ENCODE measurements at regions of chr11 and their contacts with region 1.

Region 1: DNA sequence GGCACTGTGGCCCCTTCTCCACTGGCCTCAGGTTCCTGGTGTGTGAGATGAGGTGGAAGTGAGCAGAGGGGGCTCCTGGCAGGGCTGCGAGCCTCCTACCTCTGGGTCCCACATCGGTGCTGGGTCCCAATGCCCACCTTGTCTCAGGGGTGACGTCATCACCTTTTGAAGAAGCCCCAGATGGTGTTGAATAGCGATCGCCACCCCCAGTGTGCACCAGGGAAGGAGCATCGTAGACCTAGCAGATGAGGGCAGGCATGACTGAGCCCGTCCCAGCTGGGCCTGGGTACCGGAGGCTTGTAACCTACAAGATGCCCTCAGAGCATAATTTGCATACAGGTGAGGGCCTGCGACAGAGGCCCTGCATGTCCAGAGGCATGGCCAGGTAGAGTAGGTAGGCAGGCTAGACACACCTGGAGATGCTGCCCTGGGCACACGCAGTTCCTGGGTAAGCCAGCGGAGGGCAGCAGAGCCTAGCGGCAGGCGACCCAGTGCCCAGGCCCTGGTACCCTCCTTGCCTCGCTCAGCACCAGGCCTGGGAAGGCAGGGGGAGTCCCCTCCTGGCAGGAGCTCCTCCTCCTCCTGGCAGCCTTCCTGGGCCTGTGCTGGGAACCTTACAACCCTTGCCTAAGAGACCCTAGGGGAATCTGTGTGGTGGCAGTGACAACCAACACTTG is 52.5 kb downstream of the TPCN2 start:
- DNase-seq: peak in 1 of 2 donors; percentile 36
- ATAC-seq: peak; percentile 41 to 65
- H3K4me3 ChIP-seq: no peak overlapping the region
- H3K27ac ChIP-seq: no peak overlapping the region
- H3K4me1 ChIP-seq: no peaks in the 10 kb centered on the region
- H3K27me3 ChIP-seq: peaks cover 0 to 6% (median 5%) of the 10 kb centered on the region in 3 donors
- CTCF ChIP-seq: peak; percentile 86 to 96 (median 91)
- POLR2A ChIP-seq: no peak

Region 2: DNA sequence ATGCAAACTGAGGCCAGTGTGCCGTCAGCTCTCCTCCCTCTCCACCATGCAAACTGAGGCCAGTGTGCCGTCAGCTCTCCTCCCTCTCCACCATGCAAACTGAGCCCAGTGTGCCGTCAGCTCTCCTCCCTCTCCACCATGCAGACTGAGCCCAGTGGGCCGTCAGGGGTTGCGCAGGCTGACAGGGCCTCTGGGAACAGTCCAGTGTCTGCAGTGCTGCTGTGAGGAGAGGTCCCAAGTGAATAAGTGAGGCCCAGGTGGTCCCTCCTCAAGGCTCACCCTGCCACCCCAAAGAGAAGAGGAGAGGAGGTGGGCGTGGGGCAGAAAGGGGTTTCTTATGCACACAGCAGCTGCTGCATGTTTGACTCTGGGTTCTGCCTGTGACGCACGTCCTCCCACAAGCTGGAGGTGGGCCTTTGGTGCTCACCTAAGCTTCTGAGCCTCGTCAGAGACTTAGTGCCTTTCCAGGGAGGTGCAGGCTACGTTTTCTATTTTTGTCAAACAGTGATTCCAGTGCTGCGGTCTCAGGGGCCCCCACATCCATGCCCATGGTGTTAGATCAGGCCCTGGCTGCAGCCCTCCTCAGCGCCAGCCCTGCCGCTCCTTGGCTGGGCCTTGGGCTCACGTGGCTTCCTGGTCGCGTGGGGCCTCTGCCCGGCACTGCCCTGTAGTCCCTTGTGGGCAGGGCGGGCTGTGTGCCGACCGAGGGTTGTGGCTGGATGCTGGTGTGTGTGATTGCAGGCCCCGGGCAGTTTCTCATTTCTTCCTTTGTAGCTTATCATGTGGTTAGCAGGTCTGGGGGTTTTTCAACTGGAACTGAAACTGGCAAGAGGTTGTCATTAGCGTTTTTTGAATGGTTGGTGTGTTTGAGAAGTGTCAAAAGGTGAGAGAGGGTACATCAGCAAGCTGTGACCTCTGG is 45.4 kb before region 1 on chr11:
- in situ Hi-C with region 1: no loop called
- intact Hi-C with region 1: no loop called
- DNase-seq: peak; percentile 20 to 59
- ATAC-seq: peak in 1 of 2 donors; percentile 60
- H3K4me3 ChIP-seq: no peak overlapping the region
- H3K27ac ChIP-seq: peak overlapping the region in 2 of 4 donors; percentile 7 to 8
- H3K4me1 ChIP-seq: peaks cover 5 to 13% of the 10 kb centered on the region in 2 donors
- H3K27me3 ChIP-seq: no peaks in the 10 kb centered on the region
- CTCF ChIP-seq: no peak
- POLR2A ChIP-seq: no peak

Region 3: DNA sequence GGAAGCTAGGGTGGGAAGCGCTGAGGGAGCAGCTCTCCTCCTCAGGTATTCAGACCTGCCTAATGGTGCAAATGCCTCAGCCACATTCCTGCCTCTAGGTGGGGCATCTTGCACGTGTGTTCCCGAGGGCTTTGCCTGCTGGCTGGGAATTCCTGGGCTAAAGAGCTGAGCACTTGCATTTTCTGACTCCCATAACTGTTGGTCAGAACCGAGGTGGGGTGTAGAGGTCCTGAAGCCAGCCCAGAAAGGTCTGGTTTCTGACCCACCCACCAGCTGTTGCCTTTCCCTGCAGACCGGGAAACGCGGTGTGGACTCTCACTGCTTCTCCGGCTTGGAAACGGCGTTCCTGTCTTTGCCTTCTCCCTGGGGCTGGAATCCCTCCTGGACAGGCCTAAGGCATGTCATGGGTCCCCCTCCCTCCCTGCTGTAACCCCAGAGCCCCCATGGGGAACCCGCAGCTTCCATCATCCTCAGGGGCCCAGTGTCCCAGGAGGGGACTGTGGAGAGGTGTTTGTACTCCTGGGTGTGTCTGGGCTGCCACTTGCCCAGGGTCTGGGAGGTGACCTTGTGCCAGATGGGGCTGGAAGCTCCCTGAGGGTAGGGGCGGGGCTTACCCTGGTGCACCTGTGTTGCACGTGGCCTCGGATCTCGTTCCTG is 30.5 kb after region 1 on chr11:
- in situ Hi-C with region 1: no loop called
- intact Hi-C with region 1: no loop called
- DNase-seq: no peak
- ATAC-seq: peak; percentile 65 to 68
- H3K4me3 ChIP-seq: no peak overlapping the region
- H3K27ac ChIP-seq: no peak overlapping the region
- H3K4me1 ChIP-seq: no peaks in the 10 kb centered on the region
- H3K27me3 ChIP-seq: peaks cover 0 to 3% (median 0%) of the 10 kb centered on the region in 3 donors
- CTCF ChIP-seq: peak; percentile 60 to 75 (median 70)
- POLR2A ChIP-seq: no peak

Region 4: GRCh38 chr11:69601011-69601975 is 500.0 kb after region 1 on chr11:
- in situ Hi-C with region 1: loop called in 1 of 4 experiments (anchors 25 kb)
- intact Hi-C with region 1: no loop called
- DNase-seq: no peak
- ATAC-seq: no peak
- H3K4me3 ChIP-seq: no peak overlapping the region
- H3K27ac ChIP-seq: no peak overlapping the region
- H3K4me1 ChIP-seq: no peaks in the 10 kb centered on the region
- H3K27me3 ChIP-seq: peaks cover 6 to 12% (median 11%) of the 10 kb centered on the region in 3 donors
- CTCF ChIP-seq: no peak
- POLR2A ChIP-seq: no peak

Region 5: GRCh38 chr11:69670158-69670845 is 569.0 kb after region 1 on chr11:
- in situ Hi-C with region 1: loop called in 1 of 4 experiments (anchors 25 kb)
- intact Hi-C with region 1: no loop called
- DNase-seq: peak; percentile 58 to 80
- ATAC-seq: peak; percentile 43 to 67
- H3K4me3 ChIP-seq: no peak overlapping the region
- H3K27ac ChIP-seq: peak overlapping the region in 1 of 4 donors; percentile 20
- H3K4me1 ChIP-seq: peaks cover 21 to 29% of the 10 kb centered on the region in 2 donors
- H3K27me3 ChIP-seq: no peaks in the 10 kb centered on the region
- CTCF ChIP-seq: peak; percentile 78 to 91 (median 80)
- POLR2A ChIP-seq: no peak

Measured in gastrocnemius medialis (tissue), 4 donors.